Activated CD8-positive, alpha-beta T cell treated with anti-CD3 and anti-CD28 coated beads for 36 hours (primary cell): ENCODE measurements at regions of chr1 and their contacts with region 1.

Region 1: GRCh38 chr1:204506961-204507387 is 9.2 kb upstream of the MDM4 start:
- DNase-seq: peak; percentile 93
- ATAC-seq: peak; percentile 75
- H3K4me3 Mint-ChIP-seq: peak overlapping the region; percentile 89
- H3K27ac Mint-ChIP-seq: peak overlapping the region; percentile 99
- H3K4me1 Mint-ChIP-seq: peaks cover 26% of the 10 kb centered on the region
- H3K27me3 Mint-ChIP-seq: peaks cover 3% of the 10 kb centered on the region
- CTCF ChIP-seq: no peak

Region 2: GRCh38 chr1:204225841-204226735 is 280.9 kb before region 1 on chr1:
- CTCF ChIA-PET with region 1: no interaction called
- POLR2A ChIA-PET with region 1: no interaction called
- intact Hi-C with region 1: no loop called
- DNase-seq: no peak
- ATAC-seq: no peak
- H3K4me3 Mint-ChIP-seq: no peak overlapping the region
- H3K27ac Mint-ChIP-seq: no peak overlapping the region
- H3K4me1 Mint-ChIP-seq: no peaks in the 10 kb centered on the region
- H3K27me3 Mint-ChIP-seq: no peaks in the 10 kb centered on the region
- CTCF ChIP-seq: no peak

Region 3: GRCh38 chr1:204411451-204412204 is 95.3 kb before region 1 on chr1 and contains the start of gene PPP1R15B:
- CTCF ChIA-PET with region 1: interaction called, 20 read pairs
- POLR2A ChIA-PET with region 1: interaction called, 11 read pairs
- intact Hi-C with region 1: no loop called
- DNase-seq: peak; percentile 97
- ATAC-seq: peak; percentile 92
- H3K4me3 Mint-ChIP-seq: peak within 1 kb of the TSS; percentile 99
- H3K27ac Mint-ChIP-seq: peak within 1 kb of the TSS; percentile 100
- H3K4me1 Mint-ChIP-seq: peaks cover 19% of the 10 kb centered on the region
- H3K27me3 Mint-ChIP-seq: no peaks in the 10 kb centered on the region
- CTCF ChIP-seq: no peak
- total RNA-seq, gene PPP1R15B: 63.8 to 64.6 TPM

Region 4: GRCh38 chr1:204417231-204417997 is 89.6 kb before region 1 on chr1:
- CTCF ChIA-PET with region 1: interaction called, 20 read pairs
- POLR2A ChIA-PET with region 1: no interaction called
- intact Hi-C with region 1: no loop called
- DNase-seq: peak; percentile 58
- ATAC-seq: peak; percentile 73
- H3K4me3 Mint-ChIP-seq: no peak overlapping the region
- H3K27ac Mint-ChIP-seq: peak overlapping the region; percentile 41
- H3K4me1 Mint-ChIP-seq: peaks cover 45% of the 10 kb centered on the region
- H3K27me3 Mint-ChIP-seq: no peaks in the 10 kb centered on the region
- CTCF ChIP-seq: no peak

Region 5: GRCh38 chr1:204453141-204453772 is 53.7 kb before region 1 on chr1:
- CTCF ChIA-PET with region 1: interaction called, 1,122 read pairs
- POLR2A ChIA-PET with region 1: interaction called, 11 read pairs
- intact Hi-C with region 1: no loop called
- DNase-seq: peak; percentile 92
- ATAC-seq: peak; percentile 98
- H3K4me3 Mint-ChIP-seq: peak overlapping the region; percentile 35
- H3K27ac Mint-ChIP-seq: peak overlapping the region; percentile 88
- H3K4me1 Mint-ChIP-seq: peaks cover 20% of the 10 kb centered on the region
- H3K27me3 Mint-ChIP-seq: no peaks in the 10 kb centered on the region
- CTCF ChIP-seq: no peak

Region 6: DNA sequence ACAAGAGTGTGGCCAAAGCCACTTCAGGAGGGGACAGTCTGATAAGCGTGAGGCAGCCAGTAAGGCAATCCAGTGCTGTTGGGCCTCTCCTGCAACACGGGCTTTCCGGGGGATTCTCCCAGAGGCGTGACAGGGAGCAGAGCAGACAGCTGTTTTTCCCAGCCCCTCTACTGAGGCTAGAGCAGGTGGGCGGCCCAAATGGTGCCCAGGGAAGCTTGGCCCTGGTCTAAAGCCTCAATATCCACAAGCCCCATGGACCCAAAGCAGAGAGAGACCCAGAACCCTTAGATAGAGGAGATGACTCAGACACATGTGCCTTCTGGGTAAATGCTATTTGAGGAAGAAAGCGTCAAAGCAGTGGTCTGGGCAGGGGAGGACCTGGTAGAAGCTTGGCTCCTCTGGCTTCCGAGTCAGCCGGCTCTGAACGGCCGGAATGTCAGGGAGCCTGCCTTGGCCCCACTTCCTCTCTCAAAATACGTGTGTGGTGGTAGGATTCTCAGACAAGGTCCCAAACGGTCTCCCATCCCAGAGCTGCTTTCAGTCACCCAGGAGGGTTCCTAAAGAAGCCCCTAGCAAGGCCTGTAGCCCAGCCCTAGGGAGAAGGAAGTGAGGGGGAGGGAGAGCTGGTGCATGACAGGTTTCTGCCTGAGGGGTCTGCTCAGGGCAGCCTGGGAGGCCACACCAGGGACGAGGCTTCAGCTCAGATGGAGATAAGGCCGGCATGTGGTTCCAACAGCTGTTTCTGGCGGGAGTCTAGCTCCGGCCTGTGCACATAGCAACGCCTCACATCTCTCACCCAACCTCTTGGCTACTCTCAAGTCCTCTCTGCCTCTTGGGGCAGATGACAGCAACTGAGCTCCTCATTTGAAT is 41.2 kb before region 1 on chr1:
- CTCF ChIA-PET with region 1: interaction called, 13 read pairs
- POLR2A ChIA-PET with region 1: no interaction called
- intact Hi-C with region 1: no loop called
- DNase-seq: no peak
- ATAC-seq: no peak
- H3K4me3 Mint-ChIP-seq: no peak overlapping the region
- H3K27ac Mint-ChIP-seq: peak overlapping the region; percentile 39
- H3K4me1 Mint-ChIP-seq: peaks cover 53% of the 10 kb centered on the region
- H3K27me3 Mint-ChIP-seq: no peaks in the 10 kb centered on the region
- CTCF ChIP-seq: no peak

Region 7: DNA sequence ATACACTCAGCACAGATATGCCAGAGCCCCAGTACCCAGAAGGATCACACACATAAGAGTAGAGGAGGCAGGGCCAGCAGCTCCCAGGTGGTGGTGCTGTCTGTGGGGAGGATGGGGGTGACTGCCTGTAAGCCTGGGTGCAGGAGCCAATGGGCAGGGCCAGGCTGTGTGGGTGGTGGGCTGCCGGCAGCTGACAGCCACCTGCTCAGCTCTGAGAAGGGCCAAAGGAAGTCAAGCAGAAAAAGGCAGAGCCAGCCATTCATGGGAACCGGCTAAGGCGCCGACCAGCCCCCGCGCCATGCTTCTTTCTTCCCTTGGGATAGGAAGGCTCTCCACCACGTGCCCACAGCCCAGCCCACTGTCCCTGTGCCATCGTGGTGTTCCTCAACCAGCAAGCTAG is 26.5 kb before region 1 on chr1:
- CTCF ChIA-PET with region 1: interaction called, 17 read pairs
- POLR2A ChIA-PET with region 1: no interaction called
- intact Hi-C with region 1: no loop called
- DNase-seq: peak; percentile 40
- ATAC-seq: peak; percentile 69
- H3K4me3 Mint-ChIP-seq: no peak overlapping the region
- H3K27ac Mint-ChIP-seq: no peak overlapping the region
- H3K4me1 Mint-ChIP-seq: peaks cover 55% of the 10 kb centered on the region
- H3K27me3 Mint-ChIP-seq: no peaks in the 10 kb centered on the region
- CTCF ChIP-seq: no peak

Region 8: DNA sequence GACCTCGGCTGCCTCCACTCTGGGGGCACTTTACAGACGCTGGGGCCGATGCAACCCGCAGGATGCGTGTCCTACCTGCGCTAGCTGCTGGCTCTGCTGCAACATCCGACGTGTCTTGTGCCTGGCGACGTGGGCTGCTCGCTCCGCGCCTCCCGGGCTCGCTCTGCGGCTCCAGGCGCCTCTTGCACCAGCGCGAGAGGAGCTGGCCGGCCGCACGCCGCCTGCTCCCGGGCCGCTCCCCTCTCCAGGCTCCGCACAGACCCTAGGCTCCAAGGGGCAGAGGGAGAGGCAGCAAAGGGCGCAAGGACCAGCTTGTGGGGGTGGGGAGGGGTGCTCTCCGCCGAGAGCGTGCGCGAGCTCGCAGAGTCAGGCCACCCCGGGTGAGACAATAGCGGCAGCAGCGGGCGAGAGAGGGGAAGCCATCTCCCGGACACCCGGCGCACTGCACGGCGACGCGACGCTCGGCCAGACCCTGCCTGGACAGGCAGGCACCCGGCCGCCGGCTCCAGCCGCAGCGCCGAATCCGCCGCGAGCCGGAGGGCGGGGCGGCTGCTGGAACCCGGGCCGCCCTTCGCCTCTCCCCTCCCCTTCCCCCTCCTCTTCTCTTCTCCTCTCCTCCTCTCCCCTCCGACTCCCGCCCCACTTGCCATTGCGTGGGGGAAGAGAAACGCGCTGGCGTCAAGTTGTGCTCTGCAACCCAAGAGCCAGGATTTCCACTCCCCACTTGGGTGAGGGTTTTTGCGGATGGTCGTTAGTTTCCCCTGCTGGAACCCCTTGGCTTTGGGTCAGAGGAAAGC is 12.5 kb before region 1 on chr1 and contains the start of gene PIK3C2B:
- CTCF ChIA-PET with region 1: interaction called, 52 read pairs
- POLR2A ChIA-PET with region 1: interaction called, 45 read pairs
- intact Hi-C with region 1: no loop called
- DNase-seq: peak; percentile 81
- ATAC-seq: peak; percentile 80
- H3K4me3 Mint-ChIP-seq: peak within 1 kb of the TSS; percentile 88
- H3K27ac Mint-ChIP-seq: peak within 1 kb of the TSS; percentile 94
- H3K4me1 Mint-ChIP-seq: peaks cover 46% of the 10 kb centered on the region
- H3K27me3 Mint-ChIP-seq: no peaks in the 10 kb centered on the region
- CTCF ChIP-seq: peak; percentile 58
- total RNA-seq, gene PIK3C2B: 26.6 to 28.9 TPM